ENCODE measurements at regions of chr3 and their contacts with region 1.

Region 1: GRCh38 chr3:45011756-45012508 is 14.2 kb upstream of the CLEC3B start:
- DNase-seq: no peak
- H3K4me3 ChIP-seq: no peak overlapping the region
- H3K27ac ChIP-seq: no peak overlapping the region
- H3K4me1 ChIP-seq: no peaks in the 10 kb centered on the region
- H3K27me3 ChIP-seq: no peaks in the 10 kb centered on the region
- CTCF ChIP-seq: no peak

Region 2: DNA sequence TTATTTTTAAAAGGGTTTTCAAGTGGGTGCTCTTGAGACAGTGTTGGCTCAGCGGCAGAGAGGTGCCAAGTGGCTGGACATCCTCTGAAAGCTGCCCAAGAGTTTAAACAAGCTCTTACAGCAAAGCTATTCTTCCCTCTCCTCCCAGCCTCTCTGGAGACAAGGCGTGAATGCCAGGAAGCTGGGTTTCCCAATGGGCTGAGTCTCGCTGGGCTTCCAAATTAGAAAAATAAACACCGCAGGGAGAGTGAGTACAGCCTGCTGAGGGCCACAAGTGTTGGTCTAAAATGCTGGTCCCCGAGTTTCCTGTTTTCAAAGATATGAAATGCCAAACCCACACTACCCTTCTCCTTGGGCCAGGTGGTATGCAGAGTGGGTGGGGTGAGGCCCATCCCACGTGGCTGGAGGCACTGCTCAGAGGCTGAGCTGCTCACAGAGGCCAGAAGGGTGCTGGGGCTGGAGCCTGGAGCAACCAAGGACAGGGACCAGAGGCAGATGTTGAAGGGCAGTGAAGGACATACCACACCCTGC is 72.3 kb before region 1 on chr3:
- CTCF ChIA-PET with region 1: no interaction called
- POLR2A ChIA-PET with region 1: interaction called, 13 read pairs
- intact Hi-C with region 1: no loop called
- DNase-seq: no peak
- H3K4me3 ChIP-seq: no peak overlapping the region
- H3K27ac ChIP-seq: no peak overlapping the region
- H3K4me1 ChIP-seq: no peaks in the 10 kb centered on the region
- H3K27me3 ChIP-seq: no peaks in the 10 kb centered on the region
- CTCF ChIP-seq: no peak

Region 3: GRCh38 chr3:45218578-45219390 is 206.9 kb after region 1 on chr3:
- CTCF ChIA-PET with region 1: interaction called, 11 read pairs
- POLR2A ChIA-PET with region 1: no interaction called
- intact Hi-C with region 1: no loop called
- DNase-seq: peak; percentile 57 to 77
- H3K4me3 ChIP-seq: no peak overlapping the region
- H3K27ac ChIP-seq: peak overlapping the region; percentile 78
- H3K4me1 ChIP-seq: peaks cover 46% of the 10 kb centered on the region
- H3K27me3 ChIP-seq: no peaks in the 10 kb centered on the region
- CTCF ChIP-seq: no peak